Head of caudate nucleus (tissue), 42 donors: ENCODE measurements at regions of chr5 and their contacts with region 1.

Region 1: DNA sequence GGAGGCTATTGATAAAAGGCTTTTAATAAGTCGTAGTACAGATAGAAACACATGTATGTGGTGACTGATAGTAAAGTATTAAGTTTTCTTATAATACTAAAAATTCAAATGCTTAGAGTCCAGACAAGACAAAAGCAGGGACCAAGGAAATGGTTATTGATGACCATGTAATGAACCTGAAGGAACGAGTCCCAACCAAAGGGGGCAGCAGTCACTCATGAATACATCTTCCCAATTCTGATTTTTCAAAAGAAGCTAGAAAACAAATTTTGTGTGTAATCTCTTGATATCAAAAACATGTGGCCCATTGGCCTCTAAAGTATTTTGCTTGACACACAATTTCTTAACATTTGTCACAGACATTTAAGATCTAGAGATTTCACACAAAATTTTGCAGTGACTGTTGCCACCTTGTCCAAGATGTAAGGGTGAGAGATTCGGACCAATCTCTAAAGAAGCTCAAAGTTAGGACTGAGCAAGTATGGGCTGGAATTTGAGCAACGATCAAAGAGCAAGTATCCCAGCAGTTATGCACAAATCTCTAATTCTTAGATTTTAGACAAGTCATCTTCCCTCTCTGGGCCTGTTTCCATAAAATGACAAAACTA is 66.8 kb downstream of the ARL15 start:
- DNase-seq: peak in 29 of 42 donors; percentile 8 to 77 (median 35)

Region 2: GRCh38 chr5:54415896-54416601 is 172.5 kb after region 1 on chr5:
- intact Hi-C with region 1: loop called (anchors 5 kb)
- DNase-seq: no peak

Region 3: GRCh38 chr5:54867310-54867944 is 623.9 kb after region 1 on chr5:
- intact Hi-C with region 1: loop called (anchors 10 kb)
- DNase-seq: peak in 2 of 42 donors; percentile 12 to 21